ENCODE measurements at regions of chr11 and their contacts with region 1.

Region 1: DNA sequence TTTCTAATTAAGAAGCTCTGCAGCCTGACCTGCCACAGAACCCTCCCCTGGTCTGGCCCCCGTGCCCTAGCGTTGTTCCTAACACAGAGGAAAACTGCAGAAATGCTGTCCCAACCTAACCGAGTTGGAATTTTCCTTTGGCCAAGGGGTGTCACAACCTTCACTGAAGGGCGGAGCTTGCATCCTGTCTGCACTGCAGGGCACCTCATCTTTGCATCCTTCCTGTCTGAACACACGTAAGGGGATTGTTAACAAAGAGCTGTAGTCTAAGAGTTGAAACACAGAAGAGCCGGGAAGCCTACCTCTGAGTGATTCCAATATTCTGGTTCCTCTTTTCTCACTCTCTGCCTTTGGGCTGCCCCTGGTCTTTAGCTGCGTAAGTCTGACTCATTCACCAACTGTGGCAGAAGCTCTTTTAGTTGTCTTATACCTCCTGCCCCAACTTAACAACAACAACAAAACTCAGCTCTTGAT is 1.6 kb downstream of the DIXDC1 start:
- DNase-seq: peak; percentile 66
- ATAC-seq: peak; percentile 89
- H3K4me3 Mint-ChIP-seq: peak overlapping the region; percentile 73
- H3K27ac Mint-ChIP-seq: peak overlapping the region; percentile 93
- H3K4me1 Mint-ChIP-seq: peaks cover 51% of the 10 kb centered on the region
- H3K27me3 Mint-ChIP-seq: no peaks in the 10 kb centered on the region

Region 2: GRCh38 chr11:111526501-111526900 is 412.2 kb before region 1 on chr11:
- CTCF ChIA-PET with region 1: no interaction called
- POLR2A ChIA-PET with region 1: no interaction called
- intact Hi-C with region 1: loop called in 1 of 2 experiments (anchors 5 kb)
- DNase-seq: peak; percentile 65
- ATAC-seq: peak; percentile 66
- H3K4me3 Mint-ChIP-seq: no peak overlapping the region
- H3K27ac Mint-ChIP-seq: peak overlapping the region; percentile 67
- H3K4me1 Mint-ChIP-seq: peaks cover 65% of the 10 kb centered on the region
- H3K27me3 Mint-ChIP-seq: peaks cover 3% of the 10 kb centered on the region

Region 3: GRCh38 chr11:111793863-111794262 is 144.9 kb before region 1 on chr11:
- CTCF ChIA-PET with region 1: no interaction called
- POLR2A ChIA-PET with region 1: no interaction called
- intact Hi-C with region 1: no loop called
- DNase-seq: no peak
- ATAC-seq: no peak
- H3K4me3 Mint-ChIP-seq: no peak overlapping the region
- H3K27ac Mint-ChIP-seq: no peak overlapping the region
- H3K4me1 Mint-ChIP-seq: peaks cover 4% of the 10 kb centered on the region
- H3K27me3 Mint-ChIP-seq: no peaks in the 10 kb centered on the region

Region 4: GRCh38 chr11:112050721-112051120 is 112.0 kb after region 1 on chr11:
- CTCF ChIA-PET with region 1: no interaction called
- POLR2A ChIA-PET with region 1: no interaction called
- intact Hi-C with region 1: loop called in 1 of 2 experiments (anchors 10 kb)
- DNase-seq: no peak
- ATAC-seq: no peak
- H3K4me3 Mint-ChIP-seq: no peak overlapping the region
- H3K27ac Mint-ChIP-seq: no peak overlapping the region
- H3K4me1 Mint-ChIP-seq: peaks cover 19% of the 10 kb centered on the region
- H3K27me3 Mint-ChIP-seq: no peaks in the 10 kb centered on the region

Region 5: DNA sequence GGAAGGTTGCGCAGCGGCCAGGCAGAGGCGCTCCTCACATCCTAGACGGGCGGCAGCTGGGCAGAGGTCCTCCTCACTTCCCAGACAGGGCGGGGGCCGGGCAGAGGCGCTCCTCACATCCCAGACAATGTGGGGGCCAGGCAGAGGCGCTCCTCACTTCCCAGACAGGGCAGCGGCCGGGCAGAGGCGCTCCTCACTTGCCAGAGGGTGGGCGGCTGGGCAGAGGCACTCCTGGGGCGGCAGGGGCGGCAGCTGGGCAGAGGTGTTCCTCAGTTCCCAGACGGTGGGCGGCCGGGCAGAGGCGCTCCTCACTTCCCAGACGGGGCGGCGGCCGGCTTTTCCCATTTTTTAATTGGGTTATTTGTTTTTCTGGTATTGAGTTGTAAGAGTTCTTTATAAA is 267.3 kb after region 1 on chr11:
- CTCF ChIA-PET with region 1: no interaction called
- POLR2A ChIA-PET with region 1: no interaction called
- intact Hi-C with region 1: no loop called
- DNase-seq: no peak
- ATAC-seq: no peak
- H3K4me3 Mint-ChIP-seq: no peak overlapping the region
- H3K27ac Mint-ChIP-seq: no peak overlapping the region
- H3K4me1 Mint-ChIP-seq: peaks cover 3% of the 10 kb centered on the region
- H3K27me3 Mint-ChIP-seq: peaks cover 4% of the 10 kb centered on the region

Measured in activated CD4-positive, alpha-beta T cell treated with anti-CD3 and anti-CD28 coated beads for 36 hours (primary cell).